Activated B cell treated with CpG ODN at 0.5 μM for 24 hours (primary cell): ENCODE measurements at regions of chr15 and their contacts with region 1.

Region 1: GRCh38 chr15:65177901-65178300 is 7.2 kb downstream of the CLPX start:
- DNase-seq: no peak
- ATAC-seq: no peak
- H3K4me3 Mint-ChIP-seq: no peak overlapping the region
- H3K27ac Mint-ChIP-seq: no peak overlapping the region
- H3K4me1 Mint-ChIP-seq: peaks cover 11% of the 10 kb centered on the region
- H3K27me3 Mint-ChIP-seq: no peaks in the 10 kb centered on the region
- CTCF ChIP-seq: no peak

Region 2: GRCh38 chr15:65069179-65069578 is 108.7 kb before region 1 on chr15:
- CTCF ChIA-PET with region 1: no interaction called
- POLR2A ChIA-PET with region 1: no interaction called
- intact Hi-C with region 1: no loop called
- DNase-seq: no peak
- ATAC-seq: no peak
- H3K4me3 Mint-ChIP-seq: no peak overlapping the region
- H3K27ac Mint-ChIP-seq: no peak overlapping the region
- H3K4me1 Mint-ChIP-seq: peaks cover 5% of the 10 kb centered on the region
- H3K27me3 Mint-ChIP-seq: peaks cover 32% of the 10 kb centered on the region
- CTCF ChIP-seq: no peak

Region 3: DNA sequence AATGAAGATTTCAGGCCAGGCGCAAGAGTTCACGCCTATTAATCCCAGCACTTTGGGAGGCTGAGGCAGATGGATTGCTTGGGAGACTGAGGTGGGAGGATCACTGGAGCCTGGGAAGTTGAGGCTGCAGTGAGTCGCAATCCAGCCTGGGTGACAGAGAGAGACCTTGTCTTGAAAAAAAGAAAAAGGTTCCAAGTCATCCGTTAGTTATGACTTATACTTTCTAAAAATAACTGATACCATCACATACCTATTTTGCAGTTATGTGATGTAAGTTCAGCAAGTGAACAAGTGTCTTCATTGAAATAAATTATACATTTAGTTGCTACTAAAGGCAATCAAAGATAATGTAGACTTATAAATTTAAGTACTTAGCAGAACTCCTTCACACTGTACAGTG is 14.9 kb before region 1 on chr15:
- CTCF ChIA-PET with region 1: no interaction called
- POLR2A ChIA-PET with region 1: no interaction called
- intact Hi-C with region 1: loop called (anchors 2 kb)
- DNase-seq: no peak
- ATAC-seq: no peak
- H3K4me3 Mint-ChIP-seq: no peak overlapping the region
- H3K27ac Mint-ChIP-seq: no peak overlapping the region
- H3K4me1 Mint-ChIP-seq: no peaks in the 10 kb centered on the region
- H3K27me3 Mint-ChIP-seq: no peaks in the 10 kb centered on the region
- CTCF ChIP-seq: no peak

Region 4: DNA sequence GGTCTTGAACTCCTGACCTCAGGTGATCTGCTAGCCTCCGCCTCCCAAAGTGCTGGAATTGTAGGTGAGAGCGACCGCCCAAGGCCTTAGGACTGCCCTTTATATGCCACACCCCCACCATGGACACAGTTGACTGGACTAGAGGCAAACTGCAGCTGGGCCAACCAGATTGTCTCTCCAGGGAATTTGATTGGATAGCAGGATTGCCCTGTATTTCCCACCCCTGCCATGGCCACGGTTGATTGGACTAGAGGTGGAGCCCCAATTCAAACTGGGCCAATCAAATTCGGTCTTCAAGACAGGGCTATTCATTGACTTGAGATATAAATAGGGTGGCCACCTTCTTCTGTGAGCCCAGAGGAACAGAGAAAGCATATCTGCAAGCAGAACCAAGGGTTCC is 14.1 kb after region 1 on chr15:
- CTCF ChIA-PET with region 1: no interaction called
- POLR2A ChIA-PET with region 1: no interaction called
- intact Hi-C with region 1: no loop called
- DNase-seq: no peak
- ATAC-seq: no peak
- H3K4me3 Mint-ChIP-seq: no peak overlapping the region
- H3K27ac Mint-ChIP-seq: no peak overlapping the region
- H3K4me1 Mint-ChIP-seq: no peaks in the 10 kb centered on the region
- H3K27me3 Mint-ChIP-seq: no peaks in the 10 kb centered on the region
- CTCF ChIP-seq: no peak

Region 5: GRCh38 chr15:65414841-65415621 is 237.1 kb after region 1 on chr15:
- CTCF ChIA-PET with region 1: no interaction called
- POLR2A ChIA-PET with region 1: no interaction called
- intact Hi-C with region 1: no loop called
- DNase-seq: no peak
- ATAC-seq: no peak
- H3K4me3 Mint-ChIP-seq: no peak overlapping the region
- H3K27ac Mint-ChIP-seq: no peak overlapping the region
- H3K4me1 Mint-ChIP-seq: peaks cover 2% of the 10 kb centered on the region
- H3K27me3 Mint-ChIP-seq: peaks cover 45% of the 10 kb centered on the region
- CTCF ChIP-seq: no peak